BJ (cell line): ENCODE measurements at regions of chr3 and their contacts with region 1.

Region 1: GRCh38 chr3:8996681-8997121 is 33.4 kb upstream of the RAD18 start:
- DNase-seq: peak; percentile 16
- H3K4me3 ChIP-seq: no peak overlapping the region
- H3K27me3 ChIP-seq: peaks cover 8% of the 10 kb centered on the region
- CTCF ChIP-seq: peak; percentile 48

Region 2: GRCh38 chr3:9013782-9014563 is 17.3 kb after region 1 on chr3:
- CTCF ChIA-PET with region 1: interaction called, 16 read pairs
- POLR2A ChIA-PET with region 1: no interaction called
- DNase-seq: no peak
- H3K4me3 ChIP-seq: no peak overlapping the region
- H3K27me3 ChIP-seq: peaks cover 2% of the 10 kb centered on the region; the same call in 1 of the 2 replicates
- CTCF ChIP-seq: no peak